Activated CD4-positive, alpha-beta memory T cell treated with anti-CD3 and anti-CD28 coated beads for 36 hours (primary cell): ENCODE measurements at regions of chr7 and their contacts with region 1.

Region 1: DNA sequence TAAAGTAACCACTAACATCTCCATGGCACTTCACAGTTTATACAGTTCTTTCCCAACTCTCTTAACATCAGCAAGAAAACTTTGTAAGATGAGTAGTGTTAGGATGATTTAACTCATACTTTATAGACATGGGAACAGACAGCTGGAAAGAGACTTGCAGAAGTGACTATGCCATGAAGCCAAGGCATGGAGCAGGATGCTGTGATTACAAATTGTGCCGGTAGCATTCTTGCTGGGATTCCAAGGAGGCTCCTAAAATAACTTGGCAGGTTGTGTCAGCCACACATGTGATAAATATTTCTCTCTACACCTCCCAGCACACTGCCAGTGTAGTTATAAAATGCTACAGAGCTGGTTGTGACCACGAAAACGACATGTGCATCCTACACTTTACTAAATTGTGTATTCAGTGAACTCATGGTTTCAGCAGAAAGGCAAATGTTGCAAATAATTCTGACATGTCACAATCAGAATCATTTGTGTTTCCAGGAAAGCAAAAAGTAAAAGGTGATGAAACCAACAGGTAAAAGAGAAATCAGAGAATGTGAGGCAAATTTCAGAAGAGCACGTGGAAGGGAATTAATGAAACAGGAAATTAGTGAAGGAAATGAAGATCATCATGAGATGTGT is 5.6 kb upstream of the CYP3A4 start:
- DNase-seq: no peak
- H3K4me3 Mint-ChIP-seq: no peak overlapping the region
- H3K27ac Mint-ChIP-seq: peak overlapping the region; percentile 55
- H3K4me1 Mint-ChIP-seq: peaks cover 24% of the 10 kb centered on the region
- H3K27me3 Mint-ChIP-seq: peaks cover 3% of the 10 kb centered on the region

Region 2: DNA sequence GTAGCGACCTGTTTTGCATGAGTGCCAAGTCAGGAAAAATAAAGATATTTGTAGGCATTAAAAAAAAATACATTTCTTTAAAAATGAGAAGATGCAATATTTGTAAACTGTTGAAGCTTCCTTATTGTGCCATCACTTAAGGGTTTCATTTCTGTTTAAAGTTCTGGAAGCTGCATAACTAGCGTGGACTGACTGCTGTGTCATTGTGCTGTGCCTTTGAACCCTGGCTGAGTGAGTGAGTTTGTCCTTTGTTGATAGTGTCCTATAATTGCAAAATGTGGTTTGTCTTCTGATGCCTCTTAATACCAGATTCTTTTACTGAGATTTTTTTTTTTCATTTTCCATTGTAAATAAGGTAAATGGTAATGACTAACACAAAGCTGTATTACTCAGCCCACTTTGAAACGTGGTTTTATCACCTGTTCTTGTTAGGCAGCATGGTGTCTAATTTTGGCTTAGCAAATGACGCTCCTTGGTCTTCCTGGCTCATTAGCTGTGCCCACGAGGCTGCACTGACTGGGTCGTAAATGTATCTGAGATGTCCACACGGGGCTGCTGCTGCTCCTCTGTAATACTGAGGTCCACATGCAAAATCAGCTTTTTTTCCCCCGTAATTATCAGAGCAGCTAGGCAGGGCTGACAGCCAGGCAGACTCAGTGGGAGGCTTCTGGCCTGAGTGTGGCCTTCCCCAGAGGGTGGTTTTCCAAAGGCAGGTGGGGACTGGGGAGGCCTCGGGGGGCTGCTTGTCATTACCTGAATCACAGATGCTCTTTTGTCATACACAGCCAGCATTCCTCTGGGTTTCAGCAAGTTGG is 158.1 kb before region 1 on chr7:
- CTCF ChIA-PET with region 1: no interaction called
- POLR2A ChIA-PET with region 1: no interaction called
- intact Hi-C with region 1: loop called (anchors 2 kb)
- DNase-seq: peak; percentile 60
- H3K4me3 Mint-ChIP-seq: no peak overlapping the region
- H3K27ac Mint-ChIP-seq: peak overlapping the region; percentile 72
- H3K4me1 Mint-ChIP-seq: peaks cover 22% of the 10 kb centered on the region
- H3K27me3 Mint-ChIP-seq: no peaks in the 10 kb centered on the region